GM12878 (cell line): ENCODE measurements at regions of chr18 and their contacts with region 1.

Region 1: DNA sequence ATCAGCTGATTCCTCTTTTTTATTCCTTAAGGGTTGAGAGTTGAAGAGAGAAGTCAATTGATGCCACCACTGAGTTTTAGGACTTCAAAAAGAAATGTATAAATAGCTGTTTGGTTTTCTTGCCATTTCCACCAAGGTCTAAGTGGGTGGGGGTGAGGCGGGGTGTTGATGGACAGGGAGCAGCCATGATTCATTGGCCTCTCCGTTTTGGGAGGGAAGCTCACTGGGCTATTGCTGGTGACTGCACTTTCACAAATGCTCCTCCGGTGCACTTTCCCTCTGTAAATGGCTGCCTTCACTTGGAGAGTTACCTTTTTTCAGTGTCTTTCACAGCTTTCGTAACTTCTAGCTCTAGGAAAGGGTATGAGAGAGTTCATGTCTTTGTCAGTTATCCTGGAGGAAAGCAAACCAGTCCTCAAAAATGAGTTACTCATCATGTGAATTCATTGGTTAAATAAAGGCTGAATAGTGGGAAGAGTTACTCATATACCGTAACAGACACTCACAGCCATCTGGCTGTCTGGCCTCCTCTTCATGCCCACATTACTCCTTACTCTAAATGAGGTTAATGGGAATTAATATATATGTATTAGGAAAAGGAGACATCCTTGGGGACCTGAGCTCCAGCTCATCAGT is 17.4 kb upstream of the CTAGE1 start:
- DNase-seq: no peak
- ATAC-seq: no peak
- H3K4me3 ChIP-seq: no peak overlapping the region
- H3K27ac ChIP-seq: no peak overlapping the region
- H3K4me1 ChIP-seq: no peaks in the 10 kb centered on the region
- H3K27me3 ChIP-seq: no peaks in the 10 kb centered on the region
- CTCF ChIP-seq: no peak
- EP300 ChIP-seq: no peak
- POLR2A ChIP-seq: no peak
- RAD21 ChIP-seq: no peak

Region 2: DNA sequence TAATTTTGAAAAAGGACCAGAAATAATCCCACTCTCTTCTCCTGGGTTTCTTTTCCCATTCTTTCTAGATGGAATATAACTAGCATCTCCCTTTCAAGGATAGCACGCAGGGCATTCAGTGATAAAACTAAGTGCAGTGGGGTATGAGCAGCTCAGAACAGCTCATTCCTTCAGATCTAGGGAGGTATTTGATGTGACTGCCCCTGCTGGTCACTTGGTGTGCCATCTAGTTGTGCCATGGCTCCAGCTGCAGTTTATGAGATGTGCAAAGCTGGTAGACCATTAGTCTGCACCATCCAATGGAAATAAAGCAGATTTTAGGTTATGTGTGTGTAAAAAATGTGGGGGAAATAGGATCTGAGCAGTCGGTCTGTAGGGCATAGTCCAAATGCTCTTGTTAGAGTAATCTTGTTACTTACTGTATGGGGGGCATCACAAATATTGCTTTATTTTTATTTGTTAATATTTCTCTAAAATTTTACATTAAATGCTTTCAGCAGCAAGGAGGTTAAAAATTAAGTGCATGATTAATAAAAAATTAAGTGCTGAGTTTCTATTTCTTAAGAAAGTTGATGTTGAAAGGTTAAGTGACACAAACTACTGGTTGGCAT is 56.3 kb before region 1 on chr18:
- CTCF ChIA-PET with region 1: no interaction called
- POLR2A ChIA-PET with region 1: no interaction called
- RAD21 ChIA-PET with region 1: no interaction called
- SMC1A ChIA-PET with region 1: no interaction called
- in situ Hi-C with region 1: no loop called
- intact Hi-C with region 1: loop called (anchors 5 kb)
- DNase-seq: no peak
- ATAC-seq: peak; percentile 74
- H3K4me3 ChIP-seq: no peak overlapping the region
- H3K27ac ChIP-seq: no peak overlapping the region
- H3K4me1 ChIP-seq: no peaks in the 10 kb centered on the region
- H3K27me3 ChIP-seq: no peaks in the 10 kb centered on the region; a peak in 1 of 4 replicates
- CTCF ChIP-seq: peak; percentile 18 to 40 (median 25); a peak in 2 of 6 replicates
- EP300 ChIP-seq: no peak
- POLR2A ChIP-seq: no peak
- RAD21 ChIP-seq: no peak

Region 3: DNA sequence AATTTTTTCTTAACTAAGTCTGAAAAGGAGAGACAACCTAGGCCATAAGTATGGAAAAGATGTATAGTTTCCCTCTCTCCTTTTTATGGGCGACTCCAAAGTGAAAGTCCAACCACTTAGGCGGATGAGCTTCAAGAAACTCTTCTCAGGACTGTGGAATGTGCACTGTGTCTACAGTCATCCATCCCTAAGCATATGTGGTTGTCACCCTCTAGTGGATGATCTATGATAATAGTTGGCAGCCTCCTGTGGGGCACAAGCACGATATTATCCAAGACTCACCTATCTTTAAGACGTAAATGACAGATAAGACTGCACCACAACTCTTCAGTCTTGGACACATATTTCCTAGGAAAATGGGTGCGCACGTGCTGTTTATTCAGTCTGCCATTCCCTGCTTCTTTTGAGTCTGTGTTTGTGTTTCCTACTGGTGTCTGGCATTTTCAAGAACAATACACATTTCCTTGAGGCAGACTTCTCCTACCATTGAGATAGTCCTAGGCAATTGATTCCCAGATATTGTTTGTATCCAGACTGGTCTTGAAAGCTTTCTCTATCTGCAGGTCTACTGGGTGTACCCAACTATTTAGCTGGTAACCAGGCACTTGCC is 128.1 kb after region 1 on chr18:
- CTCF ChIA-PET with region 1: no interaction called
- POLR2A ChIA-PET with region 1: no interaction called
- RAD21 ChIA-PET with region 1: no interaction called
- SMC1A ChIA-PET with region 1: no interaction called
- in situ Hi-C with region 1: no loop called
- intact Hi-C with region 1: no loop called
- DNase-seq: peak; percentile 3
- ATAC-seq: peak; percentile 97
- H3K4me3 ChIP-seq: no peak overlapping the region
- H3K27ac ChIP-seq: no peak overlapping the region
- H3K4me1 ChIP-seq: no peaks in the 10 kb centered on the region
- H3K27me3 ChIP-seq: peaks cover 2 to 3% of the 10 kb centered on the region in 2 experiments; a peak in 2 of 4 replicates
- CTCF ChIP-seq: peak; percentile 46 to 67 (median 63); a peak in 5 of 6 replicates
- EP300 ChIP-seq: no peak
- POLR2A ChIP-seq: no peak
- RAD21 ChIP-seq: peak; percentile 79